ENCODE measurements at regions of chr11 and their contacts with region 1.

Region 1: GRCh38 chr11:125313271-125314219 is 149.0 kb downstream of the PKNOX2 start:
- DNase-seq: no peak
- H3K4me3 ChIP-seq: no peak overlapping the region
- H3K27ac ChIP-seq: no peak overlapping the region
- H3K4me1 ChIP-seq: no peaks in the 10 kb centered on the region
- H3K27me3 ChIP-seq: no peaks in the 10 kb centered on the region
- CTCF ChIP-seq: no peak
- POLR2A ChIP-seq: no peak

Region 2: DNA sequence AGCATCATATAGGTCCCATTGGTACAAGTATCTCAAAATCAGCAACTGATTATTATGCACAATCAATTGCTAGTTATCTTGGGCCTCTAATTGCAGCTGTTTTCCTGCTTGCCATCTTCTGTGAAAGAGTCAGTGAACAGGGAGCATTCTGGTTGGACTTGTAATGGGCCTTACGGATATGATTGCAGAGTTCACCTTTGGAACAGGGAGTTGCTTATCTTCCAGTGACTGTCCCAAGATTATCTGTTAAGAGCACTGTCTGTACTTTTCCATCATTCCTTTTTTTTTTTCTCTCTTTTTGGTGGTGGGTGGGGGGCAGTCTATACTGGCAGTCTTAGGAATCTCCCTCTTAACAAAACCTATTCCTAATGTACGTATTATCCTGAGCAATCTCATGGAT is 1039.5 kb before region 1 on chr11:
- intact Hi-C with region 1: loop called (anchors 5 kb)
- DNase-seq: no peak
- H3K4me3 ChIP-seq: no peak overlapping the region
- H3K27ac ChIP-seq: no peak overlapping the region
- H3K4me1 ChIP-seq: no peaks in the 10 kb centered on the region
- H3K27me3 ChIP-seq: no peaks in the 10 kb centered on the region
- CTCF ChIP-seq: no peak
- POLR2A ChIP-seq: no peak

Region 3: GRCh38 chr11:125164422-125165110 is 149.0 kb before region 1 on chr11 and contains the start of gene PKNOX2:
- intact Hi-C with region 1: no loop called
- DNase-seq: peak; percentile 29 to 68
- H3K4me3 ChIP-seq: peak within 1 kb of the TSS; percentile 58 to 78 (median 65)
- H3K27ac ChIP-seq: peak within 1 kb of the TSS in 1 of 2 donors; percentile 51
- H3K4me1 ChIP-seq: no peaks in the 10 kb centered on the region
- H3K27me3 ChIP-seq: peaks cover 0 to 28% of the 10 kb centered on the region in 2 donors
- CTCF ChIP-seq: no peak
- POLR2A ChIP-seq: no peak
- total RNA-seq, gene PKNOX2: 0.32 to 1.0 (median 0.66) TPM